CD8-positive, alpha-beta T cell (primary cell): ENCODE measurements at regions of chr12 and their contacts with region 1.

Region 1: DNA sequence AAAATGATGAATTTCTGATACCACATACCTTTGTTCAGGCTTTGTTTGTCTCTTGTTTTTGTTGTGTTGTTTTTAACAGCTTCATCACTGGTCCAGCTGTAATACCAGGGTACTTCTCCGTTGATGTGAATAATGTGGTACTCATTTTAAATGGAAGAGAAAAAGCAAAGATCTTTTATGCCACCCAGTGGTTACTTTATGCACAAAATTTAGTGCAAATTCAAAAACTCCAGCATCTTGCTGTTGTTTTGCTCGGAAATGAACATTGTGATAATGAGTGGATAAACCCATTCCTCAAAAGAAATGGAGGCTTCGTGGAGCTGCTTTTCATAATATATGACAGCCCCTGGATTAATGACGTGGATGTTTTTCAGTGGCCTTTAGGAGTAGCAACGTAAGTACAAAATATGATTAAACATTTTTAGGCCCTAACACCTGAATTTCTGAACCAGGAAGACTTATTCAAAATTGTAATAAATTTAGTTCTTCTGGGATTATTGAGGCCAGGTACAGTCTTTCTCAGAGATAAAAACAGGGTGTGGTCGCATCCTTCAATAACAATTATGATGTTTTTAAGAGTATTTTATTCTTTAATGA is 22.4 kb downstream of the RXYLT1 start:
- DNase-seq: peak in 2 of 9 experiments; percentile 32 to 47
- ATAC-seq: no peak
- H3K4me3 ChIP-seq: no peak overlapping the region
- H3K4me3 Mint-ChIP-seq: no peak overlapping the region
- H3K27ac ChIP-seq: no peak overlapping the region
- H3K27ac Mint-ChIP-seq: no peak overlapping the region
- H3K4me1 ChIP-seq: no peaks in the 10 kb centered on the region
- H3K4me1 Mint-ChIP-seq: no peaks in the 10 kb centered on the region
- H3K27me3 ChIP-seq: no peaks in the 10 kb centered on the region
- H3K27me3 Mint-ChIP-seq: no peaks in the 10 kb centered on the region
- CTCF ChIP-seq: peak; percentile 63

Region 2: DNA sequence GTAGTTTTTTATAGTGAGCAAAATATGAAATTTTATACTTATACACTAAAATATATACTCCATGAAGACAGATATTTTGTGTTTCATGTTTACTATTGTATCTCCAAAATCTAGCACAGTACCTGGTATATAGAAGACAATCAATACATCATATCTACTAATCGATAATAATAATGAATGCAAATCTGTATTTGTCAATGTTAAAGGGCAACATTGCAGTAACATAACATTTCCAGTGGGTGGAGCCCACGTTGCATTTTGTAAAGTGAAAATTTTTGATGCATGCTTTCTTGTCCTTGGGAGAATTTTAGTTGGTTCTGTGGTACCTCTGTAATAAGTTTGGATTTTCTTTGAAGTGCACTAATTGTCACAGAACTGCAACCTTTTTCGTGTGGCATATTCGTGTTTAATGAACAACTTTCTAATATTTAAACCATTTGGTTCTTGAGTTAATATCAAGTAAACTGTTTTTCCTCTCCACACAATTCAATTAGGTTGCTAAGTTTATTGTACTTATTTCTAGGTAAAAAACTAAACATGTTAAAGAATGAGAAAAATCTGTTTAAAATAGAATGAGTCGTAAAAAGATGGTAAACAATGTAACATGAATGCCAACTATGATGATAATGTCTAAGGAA is 698.5 kb before region 1 on chr12:
- CTCF ChIA-PET with region 1: interaction called, 3 read pairs
- POLR2A ChIA-PET with region 1: no interaction called
- intact Hi-C with region 1: loop called in 1 of 2 experiments (anchors 2 kb)
- DNase-seq: peak in 2 of 9 experiments; percentile 22 to 33
- ATAC-seq: no peak
- H3K4me3 ChIP-seq: no peak overlapping the region
- H3K4me3 Mint-ChIP-seq: no peak overlapping the region
- H3K27ac ChIP-seq: no peak overlapping the region
- H3K27ac Mint-ChIP-seq: no peak overlapping the region
- H3K4me1 ChIP-seq: no peaks in the 10 kb centered on the region
- H3K4me1 Mint-ChIP-seq: no peaks in the 10 kb centered on the region
- H3K27me3 ChIP-seq: no peaks in the 10 kb centered on the region
- H3K27me3 Mint-ChIP-seq: no peaks in the 10 kb centered on the region
- CTCF ChIP-seq: peak; percentile 80

Region 3: GRCh38 chr12:63420206-63420644 is 381.9 kb before region 1 on chr12:
- CTCF ChIA-PET with region 1: interaction called, 8 read pairs
- POLR2A ChIA-PET with region 1: no interaction called
- intact Hi-C with region 1: loop called in 1 of 2 experiments (anchors 1 kb)
- DNase-seq: peak in 4 of 9 experiments; percentile 8 to 48 (median 24)
- ATAC-seq: no peak
- H3K4me3 ChIP-seq: no peak overlapping the region
- H3K4me3 Mint-ChIP-seq: no peak overlapping the region
- H3K27ac ChIP-seq: no peak overlapping the region
- H3K27ac Mint-ChIP-seq: no peak overlapping the region
- H3K4me1 ChIP-seq: no peaks in the 10 kb centered on the region
- H3K4me1 Mint-ChIP-seq: no peaks in the 10 kb centered on the region
- H3K27me3 ChIP-seq: no peaks in the 10 kb centered on the region
- H3K27me3 Mint-ChIP-seq: no peaks in the 10 kb centered on the region
- CTCF ChIP-seq: peak; percentile 32

Region 4: GRCh38 chr12:63668028-63668799 is 133.9 kb before region 1 on chr12 and contains the start of gene DPY19L2:
- CTCF ChIA-PET with region 1: interaction called, 5 read pairs
- POLR2A ChIA-PET with region 1: no interaction called
- intact Hi-C with region 1: loop called in 1 of 2 experiments (anchors 2 kb)
- DNase-seq: peak; percentile 21 to 88 (median 56)
- ATAC-seq: peak; percentile 90
- H3K4me3 ChIP-seq: peak within 1 kb of the TSS; percentile 68 to 73
- H3K4me3 Mint-ChIP-seq: peak within 1 kb of the TSS; percentile 95
- H3K27ac ChIP-seq: peak within 1 kb of the TSS; percentile 51 to 83
- H3K27ac Mint-ChIP-seq: peak within 1 kb of the TSS; percentile 72
- H3K4me1 ChIP-seq: peaks cover 7% of the 10 kb centered on the region
- H3K4me1 Mint-ChIP-seq: peaks cover 36% of the 10 kb centered on the region
- H3K27me3 ChIP-seq: no peaks in the 10 kb centered on the region
- H3K27me3 Mint-ChIP-seq: no peaks in the 10 kb centered on the region
- CTCF ChIP-seq: no peak
- total RNA-seq, gene DPY19L2: 3.4 to 3.6 TPM

Region 5: DNA sequence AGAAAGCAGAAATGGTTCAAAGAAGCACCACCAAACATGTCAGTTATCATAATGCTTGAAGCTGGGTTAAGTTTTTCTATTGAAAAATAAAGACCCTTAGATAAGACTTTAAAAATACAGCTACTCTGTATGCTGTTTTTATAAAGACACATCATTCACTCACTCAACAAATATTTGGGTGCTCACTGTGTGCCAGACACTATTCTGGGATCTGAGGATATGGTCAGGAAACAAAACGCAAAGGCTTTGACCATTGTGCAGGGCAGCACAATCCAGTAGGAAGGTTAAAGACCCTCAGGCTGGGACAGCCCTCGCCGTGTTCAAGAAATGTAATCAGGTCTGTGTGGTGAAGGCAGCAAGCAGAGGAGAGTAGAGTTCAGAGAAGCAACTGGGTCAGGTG is 95.8 kb before region 1 on chr12:
- CTCF ChIA-PET with region 1: no interaction called
- POLR2A ChIA-PET with region 1: no interaction called
- intact Hi-C with region 1: no loop called
- DNase-seq: no peak
- ATAC-seq: no peak
- H3K4me3 ChIP-seq: no peak overlapping the region
- H3K4me3 Mint-ChIP-seq: no peak overlapping the region
- H3K27ac ChIP-seq: no peak overlapping the region
- H3K27ac Mint-ChIP-seq: no peak overlapping the region
- H3K4me1 ChIP-seq: no peaks in the 10 kb centered on the region
- H3K4me1 Mint-ChIP-seq: no peaks in the 10 kb centered on the region
- H3K27me3 ChIP-seq: no peaks in the 10 kb centered on the region
- H3K27me3 Mint-ChIP-seq: peaks cover 3% of the 10 kb centered on the region
- CTCF ChIP-seq: no peak

Region 6: DNA sequence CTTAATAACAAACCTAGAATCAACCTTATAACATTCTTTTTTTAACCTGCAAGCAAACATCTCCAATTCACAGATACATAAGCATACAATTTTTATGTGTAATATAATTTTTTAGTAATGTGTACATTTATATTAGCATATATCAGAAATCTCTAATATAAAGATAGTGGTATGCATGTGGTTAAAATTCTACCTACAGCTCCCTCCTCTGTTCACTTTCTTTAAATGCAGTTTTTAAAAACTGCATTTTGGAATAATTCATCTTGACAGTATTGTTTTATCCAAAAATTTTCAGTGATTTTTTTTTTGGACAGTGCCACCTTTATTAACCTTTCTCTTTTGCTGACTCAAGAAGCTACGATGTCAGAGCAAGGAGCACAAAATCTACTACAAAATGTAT is 35.6 kb before region 1 on chr12:
- CTCF ChIA-PET with region 1: interaction called, 10 read pairs
- POLR2A ChIA-PET with region 1: no interaction called
- intact Hi-C with region 1: no loop called
- DNase-seq: no peak
- ATAC-seq: no peak
- H3K4me3 ChIP-seq: no peak overlapping the region
- H3K4me3 Mint-ChIP-seq: no peak overlapping the region
- H3K27ac ChIP-seq: no peak overlapping the region
- H3K27ac Mint-ChIP-seq: no peak overlapping the region
- H3K4me1 ChIP-seq: no peaks in the 10 kb centered on the region
- H3K4me1 Mint-ChIP-seq: no peaks in the 10 kb centered on the region
- H3K27me3 ChIP-seq: peaks cover 0 to 3% of the 10 kb centered on the region in 2 experiments
- H3K27me3 Mint-ChIP-seq: peaks cover 21% of the 10 kb centered on the region
- CTCF ChIP-seq: no peak